Activated naive CD4-positive, alpha-beta T cell treated with anti-CD3 and anti-CD28 coated beads, Interleukin-2, amount 10 ng/mL, durations not matched to agents 7 days and 5 days (primary cell): ENCODE measurements at regions of chr11 and their contacts with region 1.

Region 1: GRCh38 chr11:65888163-65888814 is at the start of gene FIBP:
- DNase-seq: peak; percentile 98
- H3K4me3 Mint-ChIP-seq: peak within 1 kb of the TSS; percentile 96
- H3K27ac Mint-ChIP-seq: peak within 1 kb of the TSS; percentile 94
- H3K4me1 Mint-ChIP-seq: peaks cover 74% of the 10 kb centered on the region
- H3K27me3 Mint-ChIP-seq: no peaks in the 10 kb centered on the region

Region 2: GRCh38 chr11:65695456-65696241 is 192.6 kb before region 1 on chr11:
- CTCF ChIA-PET with region 1: no interaction called
- DNase-seq: no peak
- H3K4me3 Mint-ChIP-seq: no peak overlapping the region
- H3K27ac Mint-ChIP-seq: no peak overlapping the region
- H3K4me1 Mint-ChIP-seq: peaks cover 2% of the 10 kb centered on the region
- H3K27me3 Mint-ChIP-seq: peaks cover 56% of the 10 kb centered on the region

Region 3: DNA sequence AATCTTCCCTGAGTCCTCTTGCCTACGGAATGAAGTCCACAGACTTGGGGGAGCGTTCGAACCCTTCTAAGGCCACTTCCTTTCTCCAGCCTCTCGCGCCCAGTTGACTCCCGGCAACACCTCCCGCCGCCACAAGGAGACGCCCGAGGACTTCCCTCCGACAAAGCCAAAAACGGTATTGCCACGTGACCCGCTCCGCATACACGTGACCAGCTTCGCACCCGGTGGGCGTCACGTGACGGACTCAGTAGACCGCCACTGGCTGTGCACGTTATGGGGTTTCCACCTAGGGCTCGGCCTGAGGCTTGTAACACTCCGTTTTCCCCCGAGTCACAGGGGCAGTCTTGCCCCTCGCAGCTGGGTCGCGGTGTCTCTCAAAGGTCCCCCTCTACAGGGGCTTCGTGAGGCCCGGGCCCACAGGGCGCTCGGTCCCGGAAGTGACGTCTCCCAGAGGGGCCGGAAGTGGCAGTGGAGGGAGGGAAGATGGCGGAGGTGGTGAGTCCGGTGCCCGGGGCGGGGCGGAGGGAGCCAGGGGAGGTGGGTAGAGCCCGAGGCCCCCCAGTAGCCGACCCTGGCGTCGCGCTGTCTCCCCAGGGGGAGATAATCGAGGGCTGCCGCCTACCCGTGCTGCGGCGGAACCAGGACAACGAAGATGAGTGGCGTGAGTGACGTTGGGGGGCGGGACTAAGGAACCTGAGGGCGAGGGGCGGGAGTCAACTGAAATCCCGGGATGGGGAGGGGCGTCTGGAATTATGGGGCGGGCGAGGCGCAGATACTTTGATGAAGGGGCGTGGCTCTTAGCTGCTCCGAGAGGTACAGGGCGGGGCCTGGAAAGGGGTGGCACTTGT is 176.3 kb before region 1 on chr11 and contains the start of gene KAT5:
- CTCF ChIA-PET with region 1: interaction called, 24 read pairs
- DNase-seq: peak; percentile 99
- H3K4me3 Mint-ChIP-seq: peak within 1 kb of the TSS; percentile 87
- H3K27ac Mint-ChIP-seq: peak within 1 kb of the TSS; percentile 98
- H3K4me1 Mint-ChIP-seq: peaks cover 38% of the 10 kb centered on the region
- H3K27me3 Mint-ChIP-seq: peaks cover 16% of the 10 kb centered on the region

Region 4: DNA sequence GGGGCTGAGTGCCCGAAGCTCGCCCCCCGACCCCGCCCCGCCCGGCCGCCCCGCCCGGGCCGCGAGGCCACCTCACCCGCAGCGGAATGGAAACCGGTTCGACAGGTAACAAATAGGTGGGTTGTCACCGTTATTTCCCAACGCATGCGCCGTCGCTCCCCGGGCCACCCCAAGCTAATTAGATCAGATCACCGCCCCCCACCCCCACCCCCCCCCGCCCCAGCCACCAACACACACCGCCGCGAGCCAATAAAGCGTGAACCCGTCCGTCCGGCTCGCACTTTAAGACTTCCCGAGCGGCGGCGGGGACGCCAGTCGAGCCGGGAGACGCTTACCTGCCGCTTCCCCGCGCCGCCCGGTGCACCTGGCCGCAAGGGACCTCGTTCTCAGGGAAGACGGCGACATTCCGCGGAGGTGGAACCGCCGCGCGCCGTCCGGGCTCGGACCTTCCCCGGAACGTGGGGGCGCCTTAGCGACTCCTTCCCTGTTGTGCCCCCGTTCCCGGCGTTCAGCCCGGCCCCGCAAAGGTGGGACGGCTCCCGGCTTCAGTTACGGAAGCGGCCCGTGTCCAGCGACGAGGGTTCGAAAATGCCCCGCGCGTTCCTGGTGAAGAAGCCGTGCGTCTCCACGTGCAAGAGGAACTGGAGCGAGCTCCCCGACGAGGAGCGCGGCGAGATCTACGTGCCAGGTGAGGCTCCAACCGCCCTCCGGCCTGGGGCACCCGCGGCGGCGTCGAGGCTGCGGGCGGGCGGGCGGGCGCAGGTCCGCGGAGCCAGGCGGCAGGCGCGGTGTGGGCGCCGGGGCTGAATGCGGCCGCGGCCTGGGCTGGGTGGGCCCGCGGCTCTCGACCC is 101.3 kb before region 1 on chr11 and contains the start of gene OVOL1:
- CTCF ChIA-PET with region 1: no interaction called
- DNase-seq: peak; percentile 42
- H3K4me3 Mint-ChIP-seq: peak within 1 kb of the TSS; percentile 59
- H3K27ac Mint-ChIP-seq: no peak within 1 kb of the TSS
- H3K4me1 Mint-ChIP-seq: peaks cover 59% of the 10 kb centered on the region
- H3K27me3 Mint-ChIP-seq: peaks cover 100% of the 10 kb centered on the region

Region 5: GRCh38 chr11:65873318-65874156 is 14.8 kb before region 1 on chr11:
- CTCF ChIA-PET with region 1: interaction called, 34 read pairs
- DNase-seq: peak; percentile 96
- H3K4me3 Mint-ChIP-seq: peak overlapping the region; percentile 85
- H3K27ac Mint-ChIP-seq: peak overlapping the region; percentile 75
- H3K4me1 Mint-ChIP-seq: peaks cover 51% of the 10 kb centered on the region
- H3K27me3 Mint-ChIP-seq: peaks cover 34% of the 10 kb centered on the region

Region 6: GRCh38 chr11:65906602-65907001 is 18.3 kb after region 1 on chr11:
- CTCF ChIA-PET with region 1: interaction called, 142 read pairs
- DNase-seq: no peak
- H3K4me3 Mint-ChIP-seq: no peak overlapping the region
- H3K27ac Mint-ChIP-seq: no peak overlapping the region
- H3K4me1 Mint-ChIP-seq: peaks cover 15% of the 10 kb centered on the region
- H3K27me3 Mint-ChIP-seq: peaks cover 75% of the 10 kb centered on the region

Region 7: GRCh38 chr11:65922565-65922964 is 34.3 kb after region 1 on chr11:
- CTCF ChIA-PET with region 1: interaction called, 10 read pairs
- DNase-seq: no peak
- H3K4me3 Mint-ChIP-seq: peak overlapping the region; percentile 38
- H3K27ac Mint-ChIP-seq: peak overlapping the region; percentile 69
- H3K4me1 Mint-ChIP-seq: peaks cover 46% of the 10 kb centered on the region
- H3K27me3 Mint-ChIP-seq: no peaks in the 10 kb centered on the region

Region 8: DNA sequence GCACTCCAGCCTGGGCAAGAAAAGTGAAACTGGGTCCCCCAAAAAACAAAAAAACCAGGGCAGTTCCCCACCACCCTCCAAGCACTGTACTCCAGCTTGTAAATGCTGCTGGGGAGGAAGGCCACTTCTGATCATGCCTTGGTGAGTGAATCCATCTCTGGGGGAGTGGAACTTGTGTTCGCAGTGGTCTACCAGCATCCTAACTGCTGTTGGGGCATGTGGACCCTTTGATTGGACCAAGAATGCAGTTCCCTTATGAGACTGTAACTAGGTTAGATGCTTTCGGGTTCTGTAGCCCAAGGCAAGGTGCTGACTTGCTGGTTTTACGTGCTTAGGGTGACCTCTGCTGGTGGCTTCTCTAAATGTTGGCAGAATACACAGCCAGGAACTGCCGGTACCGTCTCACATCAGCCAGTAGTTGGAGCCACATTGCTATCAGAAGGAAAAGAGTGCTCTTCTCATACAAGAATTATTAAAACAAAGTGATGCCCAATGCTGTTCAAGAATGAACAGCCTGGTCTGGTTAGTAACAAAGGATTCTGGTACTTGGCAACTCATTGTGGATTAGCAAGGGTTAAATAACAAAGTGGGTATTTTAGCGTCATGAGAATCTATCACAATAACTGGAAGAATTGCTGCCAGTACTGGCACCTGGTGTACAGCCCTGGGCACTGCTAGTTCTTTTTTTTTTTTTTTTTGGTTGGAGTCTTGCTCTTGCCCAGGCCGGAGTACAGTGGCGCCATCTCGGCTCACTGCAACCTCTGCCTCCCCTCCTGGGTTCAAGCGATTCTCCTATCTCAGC is 100.7 kb after region 1 on chr11:
- CTCF ChIA-PET with region 1: interaction called, 126 read pairs
- DNase-seq: peak; percentile 96
- H3K4me3 Mint-ChIP-seq: no peak overlapping the region
- H3K27ac Mint-ChIP-seq: peak overlapping the region; percentile 74
- H3K4me1 Mint-ChIP-seq: peaks cover 6% of the 10 kb centered on the region
- H3K27me3 Mint-ChIP-seq: no peaks in the 10 kb centered on the region